ENCODE measurements at regions of chr20 and their contacts with region 1.

Region 1: DNA sequence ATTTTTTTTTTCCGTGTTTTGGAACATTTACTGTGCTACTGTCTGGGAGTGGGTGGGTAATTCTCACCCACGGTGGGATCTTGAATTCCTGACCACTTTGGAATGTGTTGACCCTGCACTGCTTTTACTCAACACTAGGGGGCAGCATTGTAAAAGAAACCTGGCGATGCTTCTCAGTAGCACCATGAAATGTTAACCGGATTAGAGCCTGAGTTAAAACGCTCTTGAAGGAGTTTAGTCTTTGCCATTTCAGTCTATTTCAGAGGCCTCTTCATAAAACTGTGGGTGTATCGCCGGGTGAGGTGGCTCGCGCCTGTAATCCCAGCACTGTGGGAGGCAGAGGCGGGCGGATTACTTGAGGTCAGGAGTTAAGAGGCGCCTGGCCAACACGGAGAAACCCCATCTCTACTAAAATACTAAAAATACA is 114.4 kb upstream of the PRND start:
- DNase-seq: no peak
- ATAC-seq: peak; percentile 83

Region 2: GRCh38 chr20:4502756-4503155 is 104.5 kb before region 1 on chr20:
- intact Hi-C with region 1: no loop called
- DNase-seq: no peak
- ATAC-seq: no peak

Region 3: GRCh38 chr20:4519530-4519929 is 87.8 kb before region 1 on chr20:
- intact Hi-C with region 1: no loop called
- DNase-seq: no peak
- ATAC-seq: no peak

Region 4: DNA sequence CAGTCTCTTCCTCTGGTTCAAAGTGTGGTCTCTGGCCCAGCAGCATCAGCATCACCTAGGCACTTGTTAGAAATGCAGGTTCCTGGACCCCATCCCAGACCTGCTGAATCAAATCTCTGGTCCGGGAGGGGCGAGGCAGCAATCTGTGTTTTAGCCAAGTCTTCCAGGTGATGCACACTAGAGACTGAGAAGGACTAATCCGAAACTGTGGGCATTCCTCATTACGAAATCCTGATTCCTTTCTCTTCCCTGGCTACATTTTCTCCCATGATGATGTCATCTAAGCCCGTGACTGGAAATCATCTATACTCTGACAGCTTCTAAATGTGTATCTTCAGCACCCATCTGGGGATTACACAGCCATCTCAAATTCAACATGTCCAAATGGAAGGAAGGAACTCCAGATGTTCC is 74.7 kb after region 1 on chr20:
- intact Hi-C with region 1: no loop called
- DNase-seq: no peak
- ATAC-seq: no peak

Region 5: DNA sequence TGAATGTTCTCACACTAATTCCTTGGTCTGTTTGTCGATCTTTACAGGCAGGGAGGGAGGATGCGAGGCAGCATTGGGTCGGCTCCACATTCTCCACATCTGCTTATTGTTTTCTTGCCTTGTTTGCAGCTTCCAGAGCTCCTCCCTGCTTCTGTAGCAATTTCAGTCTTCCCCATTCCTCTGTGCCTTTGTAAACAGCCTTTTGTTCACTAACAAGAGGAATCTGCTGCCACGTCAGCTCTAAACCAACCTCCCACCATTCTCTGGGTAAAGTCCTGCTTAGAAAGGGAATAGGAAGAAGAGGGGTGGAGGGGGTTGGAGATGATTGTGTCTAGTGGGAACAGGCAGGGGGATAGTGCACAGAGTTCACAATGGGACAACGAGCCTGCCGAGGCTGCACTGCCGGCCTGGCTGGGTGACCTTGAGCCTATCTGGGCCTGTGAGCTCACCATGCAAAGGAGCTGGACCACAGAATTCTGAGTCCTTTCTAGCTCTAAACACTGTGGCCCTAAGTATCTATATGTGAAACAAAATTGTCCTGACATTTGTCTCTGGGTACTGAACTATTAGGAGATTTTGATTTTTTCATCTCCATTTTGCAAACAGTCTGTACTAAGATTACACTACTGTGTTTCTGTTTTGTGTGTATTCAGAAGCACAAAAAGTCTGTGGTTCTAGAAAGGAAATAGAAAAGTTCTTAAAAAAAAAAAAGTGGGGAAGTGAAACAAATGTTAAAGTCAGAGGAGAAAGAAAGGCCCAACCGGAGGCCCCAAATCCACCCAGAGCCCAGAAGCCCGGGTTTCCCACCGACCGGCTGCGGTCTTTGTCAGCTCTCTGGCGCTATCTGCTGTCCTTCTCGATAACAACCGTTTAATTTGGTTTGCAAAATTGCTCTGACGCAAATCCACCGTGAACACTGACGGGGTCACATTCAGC is 113.0 kb after region 1 on chr20:
- intact Hi-C with region 1: loop called (anchors 2 kb)
- DNase-seq: peak; percentile 70
- ATAC-seq: peak; percentile 92

Measured in Right ventricle myocardium superior (tissue), 1 donor.